Natural killer cell (primary cell): ENCODE measurements at regions of chr5 and their contacts with region 1.

Region 1: DNA sequence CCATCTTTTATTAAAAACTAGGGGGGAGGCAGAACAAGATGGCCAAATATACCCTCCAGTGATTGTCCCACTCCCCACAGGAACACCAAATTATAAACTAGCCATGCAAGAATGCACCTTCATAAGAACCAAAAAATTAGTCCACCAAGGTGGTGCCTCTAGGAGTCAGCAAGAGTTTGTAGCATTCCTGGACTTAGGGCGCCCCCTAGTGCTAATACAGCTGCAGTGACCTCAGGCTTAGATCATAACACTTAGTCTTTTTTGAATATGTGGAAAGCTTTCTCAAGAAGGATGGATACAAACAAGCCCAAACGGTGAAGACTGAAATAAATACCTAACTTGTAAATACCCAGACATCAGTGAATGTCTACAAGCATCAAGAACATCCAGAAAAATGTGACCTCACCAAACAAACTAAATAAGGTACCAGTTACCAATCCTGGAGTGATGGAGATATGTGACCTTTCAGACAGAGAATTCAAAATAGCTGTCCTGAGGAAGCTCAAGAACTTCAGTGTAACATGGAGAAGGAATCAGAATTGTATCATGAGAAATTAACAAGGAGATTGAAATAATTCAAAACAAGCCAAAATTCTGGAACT is 19.3 kb downstream of the PPIP5K2 start:
- DNase-seq: peak; percentile 69 to 89
- ATAC-seq: peak; percentile 96 to 99 (median 99)
- H3K4me3 ChIP-seq: no peak overlapping the region
- H3K4me3 Mint-ChIP-seq: no peak overlapping the region
- H3K27ac ChIP-seq: no peak overlapping the region
- H3K27ac Mint-ChIP-seq: no peak overlapping the region
- H3K4me1 ChIP-seq: no peaks in the 10 kb centered on the region
- H3K4me1 Mint-ChIP-seq: peaks cover 0 to 5% of the 10 kb centered on the region in 2 donors
- H3K27me3 ChIP-seq: no peaks in the 10 kb centered on the region
- H3K27me3 Mint-ChIP-seq: no peaks in the 10 kb centered on the region
- CTCF ChIP-seq: peak; percentile 85

Region 2: DNA sequence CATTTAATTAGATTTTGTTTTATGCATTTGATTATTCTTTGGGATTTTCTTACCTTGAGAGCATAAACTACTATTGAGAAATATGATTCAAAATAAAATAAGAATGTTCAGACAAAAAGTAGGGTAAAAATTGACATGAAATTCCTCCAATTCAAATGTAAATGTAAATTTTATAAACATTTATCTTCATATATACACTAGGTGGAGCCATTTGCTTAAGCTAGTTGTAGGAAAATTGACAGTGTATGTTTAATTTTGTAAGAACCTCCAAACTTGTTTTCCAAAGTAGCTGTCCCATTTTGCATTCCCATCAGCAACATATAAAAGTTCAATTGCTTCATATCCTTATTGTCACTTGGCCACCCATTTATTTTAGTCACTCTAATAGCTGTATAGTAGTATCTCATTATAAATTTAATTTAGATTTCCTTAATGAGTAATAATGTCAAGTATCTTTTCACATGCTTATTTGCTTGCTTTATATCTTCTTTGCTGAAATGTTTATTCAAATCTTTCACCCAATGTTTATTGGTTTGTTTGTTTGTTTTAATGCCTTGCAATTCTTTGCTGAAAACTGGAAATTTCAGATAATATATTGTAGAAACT is 602.9 kb before region 1 on chr5:
- intact Hi-C with region 1: loop called (anchors 1 kb)
- DNase-seq: peak in 1 of 2 donors; percentile 18
- ATAC-seq: no peak
- H3K4me3 ChIP-seq: no peak overlapping the region
- H3K4me3 Mint-ChIP-seq: no peak overlapping the region
- H3K27ac ChIP-seq: no peak overlapping the region
- H3K27ac Mint-ChIP-seq: no peak overlapping the region
- H3K4me1 ChIP-seq: no peaks in the 10 kb centered on the region
- H3K4me1 Mint-ChIP-seq: no peaks in the 10 kb centered on the region
- H3K27me3 ChIP-seq: no peaks in the 10 kb centered on the region
- H3K27me3 Mint-ChIP-seq: no peaks in the 10 kb centered on the region
- CTCF ChIP-seq: peak; percentile 29

Region 3: GRCh38 chr5:102583276-102584124 is 555.9 kb before region 1 on chr5:
- intact Hi-C with region 1: loop called (anchors 1 kb)
- DNase-seq: peak in 1 of 2 donors; percentile 20
- ATAC-seq: no peak
- H3K4me3 ChIP-seq: no peak overlapping the region
- H3K4me3 Mint-ChIP-seq: no peak overlapping the region
- H3K27ac ChIP-seq: no peak overlapping the region
- H3K27ac Mint-ChIP-seq: no peak overlapping the region
- H3K4me1 ChIP-seq: no peaks in the 10 kb centered on the region
- H3K4me1 Mint-ChIP-seq: peaks cover 0 to 4% of the 10 kb centered on the region in 2 donors
- H3K27me3 ChIP-seq: no peaks in the 10 kb centered on the region
- H3K27me3 Mint-ChIP-seq: peaks cover 0 to 9% of the 10 kb centered on the region in 2 donors
- CTCF ChIP-seq: peak; percentile 42

Region 4: DNA sequence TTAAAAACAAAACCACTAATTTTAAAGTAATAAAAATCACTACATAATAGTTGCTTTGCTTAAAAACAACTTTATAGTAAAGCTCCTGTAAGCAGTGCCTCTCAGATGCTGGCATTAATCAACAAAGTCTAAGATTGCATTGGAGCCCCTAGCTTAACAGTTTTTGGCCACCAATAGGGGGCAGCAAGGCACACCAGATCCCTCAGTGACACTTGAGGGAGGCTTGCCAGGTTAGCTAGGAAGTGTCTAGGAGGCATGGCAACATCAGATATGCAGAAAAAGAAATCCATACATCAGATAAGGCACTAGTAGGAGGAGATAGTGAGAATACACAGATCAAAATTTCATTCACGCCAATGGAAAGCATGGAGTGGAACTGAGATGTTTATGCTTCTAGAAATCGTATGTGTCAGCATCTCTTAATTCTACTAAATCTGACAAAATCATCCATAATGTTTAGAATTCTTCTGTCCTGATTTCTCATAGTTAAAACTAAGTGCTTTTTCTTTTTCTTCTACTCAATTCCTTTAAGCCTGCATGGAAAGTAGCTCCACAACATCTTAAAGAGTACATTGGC is 457.9 kb before region 1 on chr5:
- intact Hi-C with region 1: loop called (anchors 1 kb)
- DNase-seq: peak; percentile 21 to 75
- ATAC-seq: peak; percentile 56 to 76 (median 69)
- H3K4me3 ChIP-seq: no peak overlapping the region
- H3K4me3 Mint-ChIP-seq: no peak overlapping the region
- H3K27ac ChIP-seq: no peak overlapping the region
- H3K27ac Mint-ChIP-seq: no peak overlapping the region
- H3K4me1 ChIP-seq: no peaks in the 10 kb centered on the region
- H3K4me1 Mint-ChIP-seq: no peaks in the 10 kb centered on the region
- H3K27me3 ChIP-seq: no peaks in the 10 kb centered on the region
- H3K27me3 Mint-ChIP-seq: no peaks in the 10 kb centered on the region
- CTCF ChIP-seq: peak; percentile 85

Region 5: GRCh38 chr5:102778478-102778877 is 360.9 kb before region 1 on chr5:
- intact Hi-C with region 1: loop called (anchors 1 kb)
- DNase-seq: no peak
- ATAC-seq: no peak
- H3K4me3 ChIP-seq: no peak overlapping the region
- H3K4me3 Mint-ChIP-seq: no peak overlapping the region
- H3K27ac ChIP-seq: no peak overlapping the region
- H3K27ac Mint-ChIP-seq: peak overlapping the region in 1 of 2 donors; percentile 23
- H3K4me1 ChIP-seq: peaks cover under 1% of the 10 kb centered on the region
- H3K4me1 Mint-ChIP-seq: peaks cover 36 to 56% of the 10 kb centered on the region in 2 donors
- H3K27me3 ChIP-seq: no peaks in the 10 kb centered on the region
- H3K27me3 Mint-ChIP-seq: no peaks in the 10 kb centered on the region
- CTCF ChIP-seq: no peak

Region 6: DNA sequence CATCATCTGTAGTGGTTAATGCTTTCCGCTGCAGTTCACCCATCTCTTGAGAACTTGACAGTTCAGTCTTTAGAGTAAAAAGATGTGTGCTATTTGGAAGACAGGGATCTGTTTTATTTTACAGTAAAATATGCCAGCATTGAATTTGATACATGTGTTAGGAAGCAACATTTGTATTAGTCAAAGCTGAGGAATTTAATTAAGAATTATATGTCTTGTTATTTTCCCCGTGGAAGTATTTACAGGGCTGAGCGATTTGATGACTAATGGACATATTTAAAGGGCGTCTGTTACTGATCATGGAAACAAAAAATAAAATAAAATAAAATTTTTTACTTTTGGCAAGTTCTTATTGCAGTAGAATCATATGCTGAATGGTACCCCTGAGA is 283.0 kb before region 1 on chr5:
- intact Hi-C with region 1: no loop called
- DNase-seq: no peak
- ATAC-seq: peak in 1 of 3 donors; percentile 6
- H3K4me3 ChIP-seq: no peak overlapping the region
- H3K4me3 Mint-ChIP-seq: peak overlapping the region; percentile 89
- H3K27ac ChIP-seq: peak overlapping the region; percentile 39
- H3K27ac Mint-ChIP-seq: peak overlapping the region; percentile 91 to 92
- H3K4me1 ChIP-seq: peaks cover 15% of the 10 kb centered on the region
- H3K4me1 Mint-ChIP-seq: peaks cover 63 to 64% of the 10 kb centered on the region in 2 donors
- H3K27me3 ChIP-seq: no peaks in the 10 kb centered on the region
- H3K27me3 Mint-ChIP-seq: no peaks in the 10 kb centered on the region
- CTCF ChIP-seq: no peak

Region 7: DNA sequence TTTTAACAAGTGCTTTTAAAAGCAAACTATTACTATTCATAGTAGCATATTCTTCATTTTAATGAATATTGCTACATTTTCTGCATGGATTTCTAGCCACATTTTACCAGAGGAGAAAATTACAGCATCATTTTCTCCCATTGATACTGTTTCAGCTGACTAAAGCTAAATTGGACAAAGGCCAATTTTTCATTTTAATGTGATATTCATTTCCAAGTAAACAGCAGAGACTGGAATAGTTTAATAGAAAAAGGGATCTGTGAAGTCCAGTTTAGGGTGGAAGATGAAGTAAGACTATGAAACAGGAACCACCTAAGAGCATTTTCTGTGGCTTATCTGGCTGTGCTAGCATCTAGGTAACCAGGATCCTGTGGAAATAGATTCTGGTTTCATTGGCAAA is 147.6 kb before region 1 on chr5:
- intact Hi-C with region 1: no loop called
- DNase-seq: no peak
- ATAC-seq: no peak
- H3K4me3 ChIP-seq: no peak overlapping the region
- H3K4me3 Mint-ChIP-seq: no peak overlapping the region
- H3K27ac ChIP-seq: no peak overlapping the region
- H3K27ac Mint-ChIP-seq: no peak overlapping the region
- H3K4me1 ChIP-seq: no peaks in the 10 kb centered on the region
- H3K4me1 Mint-ChIP-seq: peaks cover 0 to 6% of the 10 kb centered on the region in 2 donors
- H3K27me3 ChIP-seq: no peaks in the 10 kb centered on the region
- H3K27me3 Mint-ChIP-seq: no peaks in the 10 kb centered on the region
- CTCF ChIP-seq: no peak

Region 8: GRCh38 chr5:103041071-103041676 is 98.2 kb before region 1 on chr5:
- intact Hi-C with region 1: loop called (anchors 1 kb)
- DNase-seq: peak in 1 of 2 donors; percentile 60
- ATAC-seq: peak; percentile 39 to 63 (median 52)
- H3K4me3 ChIP-seq: no peak overlapping the region
- H3K4me3 Mint-ChIP-seq: no peak overlapping the region
- H3K27ac ChIP-seq: no peak overlapping the region
- H3K27ac Mint-ChIP-seq: no peak overlapping the region
- H3K4me1 ChIP-seq: no peaks in the 10 kb centered on the region
- H3K4me1 Mint-ChIP-seq: no peaks in the 10 kb centered on the region
- H3K27me3 ChIP-seq: no peaks in the 10 kb centered on the region
- H3K27me3 Mint-ChIP-seq: peaks cover 0 to 22% of the 10 kb centered on the region in 2 donors
- CTCF ChIP-seq: peak; percentile 75

Region 9: GRCh38 chr5:103066326-103066725 is 73.0 kb before region 1 on chr5:
- intact Hi-C with region 1: loop called (anchors 10 kb)
- DNase-seq: no peak
- ATAC-seq: peak in 1 of 3 donors; percentile 62
- H3K4me3 ChIP-seq: no peak overlapping the region
- H3K4me3 Mint-ChIP-seq: no peak overlapping the region
- H3K27ac ChIP-seq: no peak overlapping the region
- H3K27ac Mint-ChIP-seq: no peak overlapping the region
- H3K4me1 ChIP-seq: no peaks in the 10 kb centered on the region
- H3K4me1 Mint-ChIP-seq: no peaks in the 10 kb centered on the region
- H3K27me3 ChIP-seq: no peaks in the 10 kb centered on the region
- H3K27me3 Mint-ChIP-seq: no peaks in the 10 kb centered on the region
- CTCF ChIP-seq: no peak